ENCODE measurements at regions of chr12 and their contacts with region 1.

Region 1: DNA sequence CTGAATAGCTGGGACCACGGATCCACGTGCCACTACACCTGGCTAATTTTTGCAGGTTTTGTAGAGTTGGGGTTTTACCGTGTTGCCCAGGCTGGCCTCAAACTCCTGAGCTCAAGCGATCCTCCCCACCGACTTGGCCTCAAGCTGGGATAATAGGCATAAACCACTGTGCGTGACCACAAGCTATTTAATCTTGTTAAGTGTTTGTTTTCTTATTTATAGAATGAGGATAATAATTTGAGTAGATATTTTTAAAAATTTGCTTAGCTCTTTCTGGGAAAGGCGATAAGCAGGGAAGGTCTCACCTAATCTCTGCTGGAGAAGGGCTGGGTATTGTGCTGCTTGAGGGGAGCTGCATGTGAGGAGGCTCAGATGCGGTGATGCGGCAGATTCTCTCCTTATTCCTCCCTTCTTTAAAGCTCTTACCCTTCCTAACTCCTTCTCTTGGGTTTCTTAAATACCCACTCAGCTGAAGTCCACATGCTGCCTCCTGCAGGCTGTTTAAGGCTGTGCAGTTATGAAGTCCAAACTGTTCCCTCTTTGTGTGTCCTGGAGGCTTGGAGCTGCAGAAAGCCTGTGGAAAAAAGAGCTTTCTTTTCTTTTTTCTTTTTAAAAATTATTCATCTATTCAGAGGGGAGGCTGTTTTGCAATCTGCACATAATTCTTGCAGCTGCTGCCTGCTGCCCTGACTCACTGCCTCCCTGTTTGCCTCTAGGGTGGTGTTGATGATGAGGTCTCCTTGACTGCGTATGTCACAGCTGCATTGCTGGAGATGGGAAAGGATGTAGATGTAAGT is 37.9 kb downstream of the A2ML1 start:
- H3K4me3 Mint-ChIP-seq: no peak overlapping the region
- H3K27ac Mint-ChIP-seq: no peak overlapping the region
- H3K4me1 Mint-ChIP-seq: no peaks in the 10 kb centered on the region
- H3K27me3 Mint-ChIP-seq: no peaks in the 10 kb centered on the region

Region 2: DNA sequence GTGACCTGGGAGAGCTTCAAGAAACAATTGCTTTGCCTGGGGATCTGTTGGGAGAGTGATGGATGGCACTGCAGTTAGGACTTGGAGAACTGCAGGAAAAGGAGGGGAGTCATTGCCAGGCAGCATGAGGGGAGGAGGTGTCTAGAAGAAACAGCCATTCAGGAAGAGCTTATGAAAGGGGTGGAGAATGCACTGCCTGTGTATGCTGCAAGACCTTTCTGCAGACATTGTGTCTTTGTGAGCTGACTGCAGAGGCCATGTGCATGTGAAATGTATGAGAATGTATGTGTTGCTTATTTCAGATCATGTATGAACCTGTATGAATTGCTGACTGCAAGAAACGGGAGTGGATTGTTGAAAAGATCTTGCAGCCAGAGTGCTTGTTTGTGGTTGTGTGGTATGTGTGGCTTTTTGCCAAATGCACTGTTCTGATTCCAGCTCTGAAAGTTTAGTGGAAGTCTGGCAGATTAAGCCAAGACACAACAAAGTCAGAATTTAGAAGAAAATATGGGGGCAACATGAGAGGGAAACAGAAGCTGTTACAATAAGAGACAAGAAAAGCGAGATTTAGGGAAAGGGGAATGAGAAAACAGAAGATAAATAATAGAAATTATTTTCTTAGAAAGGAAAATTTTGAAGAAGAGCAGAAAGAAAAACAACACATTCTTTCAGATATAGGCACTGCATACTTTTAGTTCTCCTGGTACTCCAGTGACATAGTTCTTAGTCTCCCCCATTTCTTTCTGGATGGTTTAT is 172.3 kb before region 1 on chr12:
- intact Hi-C with region 1: loop called (anchors 2 kb)
- H3K4me3 Mint-ChIP-seq: no peak overlapping the region
- H3K27ac Mint-ChIP-seq: no peak overlapping the region
- H3K4me1 Mint-ChIP-seq: peaks cover 6% of the 10 kb centered on the region
- H3K27me3 Mint-ChIP-seq: peaks cover 2% of the 10 kb centered on the region